Esophagus squamous epithelium (tissue), 5 donors: ENCODE measurements at regions of chr18 and their contacts with region 1.

Region 1: DNA sequence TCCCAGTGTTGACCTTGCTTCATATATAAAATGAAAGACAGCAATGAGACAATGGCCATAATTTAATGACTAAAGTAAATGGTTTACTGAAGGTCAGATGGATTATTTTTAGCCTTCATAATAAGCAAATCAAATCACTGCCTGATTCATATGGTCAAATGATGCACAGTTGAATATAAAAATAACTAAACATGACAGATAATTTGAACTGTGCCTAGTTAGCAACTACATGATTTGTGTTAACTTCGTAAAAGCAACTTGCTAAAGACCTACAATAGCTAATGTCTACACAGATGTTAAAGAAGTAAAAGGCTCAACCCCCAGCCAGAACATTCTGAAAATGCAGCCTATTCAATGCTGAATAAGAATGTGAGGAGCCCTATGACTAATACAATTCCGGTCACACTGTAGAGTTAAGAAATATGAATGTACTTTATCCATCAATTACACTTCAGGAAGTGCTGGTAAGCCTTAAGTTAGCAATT is 590.8 kb upstream of the CDH2 start:
- DNase-seq: no peak
- H3K4me3 ChIP-seq: no peak overlapping the region
- H3K27ac ChIP-seq: no peak overlapping the region
- H3K4me1 ChIP-seq: no peaks in the 10 kb centered on the region
- H3K27me3 ChIP-seq: no peaks in the 10 kb centered on the region
- CTCF ChIP-seq: no peak
- POLR2A ChIP-seq: no peak

Region 2: DNA sequence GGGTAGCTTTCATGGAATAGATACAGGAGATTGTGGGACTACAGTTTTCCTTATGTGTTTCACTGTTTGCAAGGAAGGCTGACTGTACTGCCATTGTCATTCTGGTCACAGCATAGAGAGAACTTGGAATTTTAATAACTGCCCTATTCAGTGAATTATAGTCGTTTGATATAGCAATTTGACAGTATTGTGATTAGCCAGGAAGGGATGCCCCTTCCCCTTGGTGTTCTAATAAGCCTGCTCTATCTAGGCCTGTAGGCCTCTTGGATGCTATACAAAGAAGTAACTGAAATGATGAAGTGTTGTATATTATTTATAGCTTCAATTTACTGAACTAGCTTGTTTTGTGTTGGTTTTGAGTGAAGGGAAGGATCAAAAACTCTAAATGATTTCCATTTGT is 62.3 kb before region 1 on chr18:
- intact Hi-C with region 1: loop called (anchors 10 kb)
- DNase-seq: no peak
- H3K4me3 ChIP-seq: no peak overlapping the region
- H3K27ac ChIP-seq: no peak overlapping the region
- H3K4me1 ChIP-seq: no peaks in the 10 kb centered on the region
- H3K27me3 ChIP-seq: no peaks in the 10 kb centered on the region
- CTCF ChIP-seq: no peak
- POLR2A ChIP-seq: no peak

Region 3: DNA sequence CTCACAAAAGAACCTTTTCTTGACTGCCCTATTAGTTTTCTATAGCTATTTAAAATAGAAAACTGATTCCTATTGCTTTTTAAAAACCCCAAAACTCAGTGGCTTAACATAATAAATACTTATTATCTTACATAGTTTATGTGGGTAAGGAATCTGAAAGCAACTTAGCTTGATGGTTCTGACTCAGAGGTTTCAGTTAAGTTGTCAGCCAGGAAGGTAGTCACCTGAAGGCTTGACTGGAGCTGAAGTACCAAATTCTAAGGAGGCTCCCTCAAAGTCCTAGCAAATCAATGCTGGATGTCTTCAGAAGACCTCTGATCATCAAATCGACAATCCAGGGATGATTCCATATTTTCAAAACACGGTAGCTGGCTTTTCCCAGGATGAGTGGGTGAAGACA is 44.3 kb before region 1 on chr18:
- intact Hi-C with region 1: no loop called
- DNase-seq: no peak
- H3K4me3 ChIP-seq: no peak overlapping the region
- H3K27ac ChIP-seq: no peak overlapping the region
- H3K4me1 ChIP-seq: no peaks in the 10 kb centered on the region
- H3K27me3 ChIP-seq: no peaks in the 10 kb centered on the region
- CTCF ChIP-seq: no peak
- POLR2A ChIP-seq: no peak

Region 4: DNA sequence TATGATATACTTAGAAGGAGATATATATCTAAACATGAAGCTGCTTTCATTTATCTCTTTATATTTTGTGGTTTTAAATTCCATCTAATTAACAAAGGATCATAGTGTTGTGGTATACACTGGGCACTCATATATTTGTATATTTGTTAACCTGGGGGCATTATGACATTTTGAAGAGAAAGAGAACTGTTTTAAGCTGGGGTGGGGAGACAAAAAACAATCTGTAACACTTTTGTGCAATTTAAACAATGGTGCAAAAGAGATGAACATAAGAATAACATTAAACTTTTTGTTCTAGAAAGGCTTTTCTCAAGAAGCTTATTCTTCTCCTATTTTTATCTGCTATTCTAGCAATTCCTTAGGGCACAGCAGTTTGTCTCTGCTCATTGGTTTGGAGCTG is 251.2 kb after region 1 on chr18:
- intact Hi-C with region 1: no loop called
- DNase-seq: no peak
- H3K4me3 ChIP-seq: no peak overlapping the region
- H3K27ac ChIP-seq: no peak overlapping the region
- H3K4me1 ChIP-seq: no peaks in the 10 kb centered on the region
- H3K27me3 ChIP-seq: no peaks in the 10 kb centered on the region
- CTCF ChIP-seq: no peak
- POLR2A ChIP-seq: no peak